CD4-positive, alpha-beta T cell (primary cell): ENCODE measurements at regions of chr1 and their contacts with region 1.

Region 1: GRCh38 chr1:226332947-226333346 is 24.0 kb upstream of the LIN9 start:
- DNase-seq: peak in 2 of 14 experiments; percentile 11 to 23
- ATAC-seq: peak; percentile 35
- H3K4me3 ChIP-seq: peak overlapping the region; percentile 13
- H3K4me3 Mint-ChIP-seq: peak overlapping the region; percentile 26
- H3K27ac ChIP-seq: no peak overlapping the region
- H3K27ac Mint-ChIP-seq: no peak overlapping the region
- H3K4me1 ChIP-seq: peaks cover 4% of the 10 kb centered on the region
- H3K4me1 Mint-ChIP-seq: peaks cover 6% of the 10 kb centered on the region
- H3K27me3 ChIP-seq: no peaks in the 10 kb centered on the region
- H3K27me3 Mint-ChIP-seq: no peaks in the 10 kb centered on the region
- CTCF ChIP-seq: no peak

Region 2: DNA sequence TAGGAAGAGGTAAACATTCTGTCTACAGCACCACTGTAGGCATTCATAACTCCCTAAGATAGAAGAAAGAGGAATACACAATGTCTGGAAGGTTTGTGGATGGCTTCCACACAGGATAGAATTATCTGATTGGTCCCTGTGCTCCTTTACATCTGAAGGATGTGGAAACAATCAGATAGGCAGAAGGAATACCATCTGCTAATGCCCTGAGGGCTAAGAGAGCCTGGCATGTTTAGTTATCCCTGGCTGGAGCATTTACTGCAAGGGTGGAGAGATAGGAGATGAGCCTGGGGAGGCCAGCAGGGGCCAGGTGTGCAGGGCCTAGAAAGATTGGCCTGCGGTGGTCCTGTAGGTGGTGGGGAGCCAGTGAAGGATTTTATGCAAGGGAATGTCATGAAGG is 137.8 kb before region 1 on chr1:
- CTCF ChIA-PET with region 1: interaction called, 5 read pairs
- POLR2A ChIA-PET with region 1: no interaction called
- intact Hi-C with region 1: loop called in 1 of 2 experiments (anchors 5 kb)
- DNase-seq: no peak
- ATAC-seq: no peak
- H3K4me3 ChIP-seq: no peak overlapping the region
- H3K4me3 Mint-ChIP-seq: no peak overlapping the region
- H3K27ac ChIP-seq: no peak overlapping the region
- H3K27ac Mint-ChIP-seq: no peak overlapping the region
- H3K4me1 ChIP-seq: no peaks in the 10 kb centered on the region
- H3K4me1 Mint-ChIP-seq: no peaks in the 10 kb centered on the region
- H3K27me3 ChIP-seq: no peaks in the 10 kb centered on the region
- H3K27me3 Mint-ChIP-seq: peaks cover 15% of the 10 kb centered on the region
- CTCF ChIP-seq: no peak

Region 3: GRCh38 chr1:226308723-226309315 is 24.1 kb before region 1 on chr1 and contains the start of gene LIN9:
- CTCF ChIA-PET with region 1: interaction called, 20 read pairs
- POLR2A ChIA-PET with region 1: interaction called, 8 read pairs
- intact Hi-C with region 1: no loop called
- DNase-seq: peak; percentile 83 to 94 (median 89)
- ATAC-seq: peak; percentile 91
- H3K4me3 ChIP-seq: peak within 1 kb of the TSS; percentile 98
- H3K4me3 Mint-ChIP-seq: peak within 1 kb of the TSS; percentile 95
- H3K27ac ChIP-seq: peak within 1 kb of the TSS in 1 of 2 donors; percentile 30
- H3K27ac Mint-ChIP-seq: peak within 1 kb of the TSS; percentile 67
- H3K4me1 ChIP-seq: peaks cover 12% of the 10 kb centered on the region
- H3K4me1 Mint-ChIP-seq: peaks cover 26% of the 10 kb centered on the region
- H3K27me3 ChIP-seq: peaks cover 0 to 8% of the 10 kb centered on the region in 2 experiments
- H3K27me3 Mint-ChIP-seq: peaks cover 25% of the 10 kb centered on the region
- CTCF ChIP-seq: no peak
- total RNA-seq, gene LIN9: 1.3 to 1.5 TPM